ENCODE measurements at regions of chr11 and their contacts with region 1.

Region 1: DNA sequence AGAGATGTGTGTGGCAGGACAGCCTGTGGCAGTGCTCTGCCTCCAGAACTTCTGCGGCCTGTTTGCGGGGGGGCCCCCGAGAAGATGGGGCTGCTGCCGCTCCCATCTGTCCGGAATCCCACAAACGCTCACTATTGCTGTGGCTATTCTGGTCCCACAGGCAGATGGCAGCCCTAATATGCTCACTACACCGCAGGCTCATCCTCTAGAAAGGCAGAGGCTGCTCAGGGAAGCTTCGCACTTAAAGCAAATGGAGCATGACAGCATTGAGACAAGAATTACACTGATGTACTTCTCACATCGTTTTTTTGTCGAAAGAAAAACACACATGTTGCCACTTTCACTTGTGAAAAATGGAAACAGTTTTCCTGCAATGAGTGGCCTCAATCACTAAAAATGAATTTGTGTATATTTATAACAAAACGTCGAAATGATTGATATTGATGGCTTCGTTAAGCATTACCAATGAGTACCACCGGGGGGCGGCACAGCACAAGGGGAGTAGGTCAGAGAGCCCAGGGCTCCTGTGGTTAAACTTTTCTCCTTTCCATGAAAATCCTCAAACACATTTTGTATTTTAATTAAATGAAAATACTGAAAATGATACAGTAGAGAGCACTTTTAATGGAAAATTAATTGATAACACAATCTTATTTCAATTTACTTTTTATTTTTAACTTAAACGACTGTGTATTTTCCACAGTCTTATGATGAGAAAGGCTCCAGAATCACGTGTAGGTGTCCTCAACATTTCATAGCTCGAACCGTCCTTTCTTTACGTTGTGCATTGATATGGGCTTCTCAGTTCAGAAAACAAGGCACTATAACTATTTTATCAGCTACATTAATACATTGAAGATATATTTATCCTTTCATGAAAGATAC is 69.1 kb downstream of the CTTN start:
- DNase-seq: peak; percentile 69

Region 2: GRCh38 chr11:70503458-70504221 is 36.2 kb after region 1 on chr11:
- intact Hi-C with region 1: no loop called
- DNase-seq: no peak

Region 3: GRCh38 chr11:70755410-70756161 is 288.1 kb after region 1 on chr11:
- intact Hi-C with region 1: loop called (anchors 1 kb)
- DNase-seq: peak; percentile 89